GM12878 (cell line): ENCODE measurements at regions of chrX and their contacts with region 1.

Region 1: GRCh38 chrX:13087322-13088155 is 43.1 kb upstream of the FAM9C start:
- DNase-seq: peak; percentile 99
- ATAC-seq: peak; percentile 54
- H3K4me3 ChIP-seq: no peak overlapping the region; the same call in 1 of the 2 replicates
- H3K27ac ChIP-seq: peak overlapping the region; percentile 100
- H3K4me1 ChIP-seq: peaks cover 89% of the 10 kb centered on the region
- H3K27me3 ChIP-seq: no peaks in the 10 kb centered on the region
- CTCF ChIP-seq: no peak
- EP300 ChIP-seq: peak; percentile 71 to 90
- POLR2A ChIP-seq: 0 out of 2 replicates have a peak, but pooled peaks have one; percentile 45
- RAD21 ChIP-seq: 0 out of 2 replicates have a peak, but pooled peaks have one; percentile 15

Region 2: DNA sequence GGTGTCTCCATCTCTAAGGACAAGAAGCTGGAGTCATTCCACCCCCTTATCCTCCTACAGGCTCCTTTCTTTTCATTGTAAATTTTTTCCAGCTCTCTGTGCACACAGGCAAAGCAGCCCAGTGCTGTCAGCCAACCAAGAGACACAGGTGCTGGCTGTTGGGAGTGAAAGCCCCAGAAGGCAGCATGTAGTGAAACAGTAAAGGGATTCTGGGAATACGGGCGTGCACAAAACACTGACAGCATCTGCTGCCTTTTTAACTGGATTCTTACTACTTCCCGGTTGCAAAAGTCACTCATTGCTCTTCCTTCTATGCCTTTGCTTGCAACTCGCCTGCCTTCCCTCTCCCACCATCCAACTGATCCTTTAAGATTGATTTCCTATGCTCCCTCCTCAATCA is 504.9 kb before region 1 on chrX:
- CTCF ChIA-PET with region 1: no interaction called
- POLR2A ChIA-PET with region 1: no interaction called
- RAD21 ChIA-PET with region 1: no interaction called
- SMC1A ChIA-PET with region 1: no interaction called
- in situ Hi-C with region 1: no loop called
- intact Hi-C with region 1: no loop called
- DNase-seq: no peak
- ATAC-seq: no peak
- H3K4me3 ChIP-seq: no peak overlapping the region
- H3K27ac ChIP-seq: no peak overlapping the region
- H3K4me1 ChIP-seq: no peaks in the 10 kb centered on the region
- H3K27me3 ChIP-seq: no peaks in the 10 kb centered on the region
- CTCF ChIP-seq: no peak
- EP300 ChIP-seq: no peak
- POLR2A ChIP-seq: no peak
- RAD21 ChIP-seq: no peak

Region 3: GRCh38 chrX:12868747-12869146 is 218.8 kb before region 1 on chrX:
- CTCF ChIA-PET with region 1: no interaction called
- POLR2A ChIA-PET with region 1: no interaction called
- RAD21 ChIA-PET with region 1: interaction called, 3 read pairs
- SMC1A ChIA-PET with region 1: no interaction called
- in situ Hi-C with region 1: no loop called
- intact Hi-C with region 1: loop called (anchors 10 kb)
- DNase-seq: peak; percentile 78
- ATAC-seq: peak; percentile 73
- H3K4me3 ChIP-seq: peak overlapping the region; percentile 63
- H3K27ac ChIP-seq: peak overlapping the region; percentile 97
- H3K4me1 ChIP-seq: peaks cover 28% of the 10 kb centered on the region
- H3K27me3 ChIP-seq: no peaks in the 10 kb centered on the region
- CTCF ChIP-seq: no peak
- EP300 ChIP-seq: peak in 1 of 2 experiments; percentile 48; a peak in 1 of 4 replicates
- POLR2A ChIP-seq: no peak; the same call in 1 of the 2 replicates
- RAD21 ChIP-seq: no peak

Region 4: DNA sequence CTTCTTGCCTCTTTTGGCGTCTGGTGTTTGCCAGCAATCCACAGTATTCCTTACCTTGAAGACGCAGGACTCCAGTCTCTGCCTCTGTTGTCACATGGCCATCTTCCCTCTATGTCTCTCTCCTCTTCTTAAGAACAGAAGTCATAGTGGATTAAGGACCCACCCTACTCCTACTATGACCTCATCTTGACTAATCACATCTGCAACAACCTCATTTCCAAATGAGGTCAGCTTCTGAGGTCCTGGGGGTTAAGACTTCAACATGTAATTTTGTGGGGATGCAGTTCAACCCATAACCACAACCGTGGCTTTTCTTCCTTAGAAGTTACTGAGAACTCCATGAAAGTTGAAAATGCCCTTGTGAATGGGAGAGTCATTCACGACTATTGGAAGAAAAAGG is 157.8 kb before region 1 on chrX:
- CTCF ChIA-PET with region 1: no interaction called
- POLR2A ChIA-PET with region 1: no interaction called
- RAD21 ChIA-PET with region 1: no interaction called
- SMC1A ChIA-PET with region 1: no interaction called
- in situ Hi-C with region 1: no loop called
- intact Hi-C with region 1: no loop called
- DNase-seq: no peak
- ATAC-seq: no peak
- H3K4me3 ChIP-seq: no peak overlapping the region
- H3K27ac ChIP-seq: no peak overlapping the region
- H3K4me1 ChIP-seq: no peaks in the 10 kb centered on the region
- H3K27me3 ChIP-seq: no peaks in the 10 kb centered on the region
- CTCF ChIP-seq: no peak
- EP300 ChIP-seq: no peak
- POLR2A ChIP-seq: no peak
- RAD21 ChIP-seq: no peak

Region 5: DNA sequence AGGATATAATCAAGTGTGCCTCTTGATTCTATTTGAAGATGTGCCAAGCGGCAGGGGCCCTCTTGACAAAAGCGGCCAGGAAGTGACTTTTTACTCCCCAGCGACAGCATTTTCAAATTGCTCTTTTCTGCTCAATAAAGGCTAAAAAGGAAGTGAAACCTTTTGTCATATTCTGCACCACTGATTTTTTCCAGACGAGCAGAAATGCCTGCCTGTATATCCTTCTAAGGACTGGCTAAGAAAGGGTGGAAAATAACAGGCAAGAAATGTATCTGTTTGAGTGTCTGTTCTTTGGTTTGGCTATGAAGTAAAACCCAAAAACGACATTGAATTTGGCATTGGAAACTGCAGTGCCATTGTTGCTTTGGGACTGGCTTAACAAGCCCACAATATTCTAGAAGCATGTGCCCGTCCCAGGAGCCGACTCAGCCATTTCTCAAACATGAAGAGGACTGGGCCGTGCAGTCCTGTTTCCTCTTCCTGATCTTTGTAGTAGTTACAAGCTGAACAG is 87.2 kb before region 1 on chrX:
- CTCF ChIA-PET with region 1: interaction called, 72 read pairs
- POLR2A ChIA-PET with region 1: interaction called, 280 read pairs
- RAD21 ChIA-PET with region 1: interaction called, 689 read pairs
- SMC1A ChIA-PET with region 1: interaction called, 847 read pairs
- in situ Hi-C with region 1: loop called (anchors 5 kb)
- intact Hi-C with region 1: loop called (anchors 1 kb)
- DNase-seq: peak; percentile 90
- ATAC-seq: peak; percentile 52
- H3K4me3 ChIP-seq: peak overlapping the region; percentile 9; the same call in 1 of the 2 replicates
- H3K27ac ChIP-seq: peak overlapping the region; percentile 91
- H3K4me1 ChIP-seq: peaks cover 69% of the 10 kb centered on the region
- H3K27me3 ChIP-seq: no peaks in the 10 kb centered on the region
- CTCF ChIP-seq: no peak
- EP300 ChIP-seq: peak; percentile 73; a peak in 2 of 4 replicates
- POLR2A ChIP-seq: no peak
- RAD21 ChIP-seq: peak; percentile 10; the same call in 1 of the 2 replicates

Region 6: DNA sequence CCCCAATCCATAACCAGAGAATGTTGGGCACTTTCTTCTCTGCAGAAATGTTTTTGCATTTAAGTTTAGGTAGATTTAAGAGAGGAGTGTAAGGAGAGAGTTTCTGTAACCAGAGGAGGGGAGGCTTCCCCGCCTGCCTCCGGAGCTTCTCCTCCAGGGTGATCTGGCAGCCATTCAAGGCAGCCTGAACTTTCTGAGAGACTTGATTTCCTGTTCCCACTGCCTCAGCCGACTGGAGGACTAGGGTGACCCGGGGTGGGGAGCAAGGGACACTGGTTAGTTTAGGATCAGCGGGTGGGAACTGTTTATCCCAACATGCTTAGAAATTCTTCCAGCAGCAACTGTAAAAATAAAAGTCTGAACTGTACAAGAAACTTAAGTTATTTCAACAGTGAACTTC is 58.2 kb before region 1 on chrX:
- CTCF ChIA-PET with region 1: interaction called, 5 read pairs
- POLR2A ChIA-PET with region 1: interaction called, 11 read pairs
- RAD21 ChIA-PET with region 1: interaction called, 18 read pairs
- SMC1A ChIA-PET with region 1: interaction called, 84 read pairs
- in situ Hi-C with region 1: no loop called
- intact Hi-C with region 1: no loop called
- DNase-seq: no peak
- ATAC-seq: peak; percentile 21
- H3K4me3 ChIP-seq: no peak overlapping the region
- H3K27ac ChIP-seq: peak overlapping the region; percentile 83
- H3K4me1 ChIP-seq: peaks cover 45% of the 10 kb centered on the region
- H3K27me3 ChIP-seq: no peaks in the 10 kb centered on the region
- CTCF ChIP-seq: no peak
- EP300 ChIP-seq: no peak
- POLR2A ChIP-seq: no peak
- RAD21 ChIP-seq: no peak

Region 7: GRCh38 chrX:13170966-13171558 is 83.5 kb after region 1 on chrX:
- CTCF ChIA-PET with region 1: no interaction called
- POLR2A ChIA-PET with region 1: no interaction called
- RAD21 ChIA-PET with region 1: no interaction called
- SMC1A ChIA-PET with region 1: no interaction called
- in situ Hi-C with region 1: no loop called
- intact Hi-C with region 1: no loop called
- DNase-seq: no peak
- ATAC-seq: no peak
- H3K4me3 ChIP-seq: no peak overlapping the region
- H3K27ac ChIP-seq: no peak overlapping the region
- H3K4me1 ChIP-seq: peaks cover 8% of the 10 kb centered on the region
- H3K27me3 ChIP-seq: no peaks in the 10 kb centered on the region
- CTCF ChIP-seq: no peak
- EP300 ChIP-seq: no peak
- POLR2A ChIP-seq: no peak
- RAD21 ChIP-seq: no peak

Region 8: GRCh38 chrX:13194291-13195103 is 107.0 kb after region 1 on chrX:
- CTCF ChIA-PET with region 1: no interaction called
- POLR2A ChIA-PET with region 1: no interaction called
- RAD21 ChIA-PET with region 1: no interaction called
- SMC1A ChIA-PET with region 1: no interaction called
- in situ Hi-C with region 1: no loop called
- intact Hi-C with region 1: no loop called
- DNase-seq: no peak
- ATAC-seq: peak; percentile 85
- H3K4me3 ChIP-seq: no peak overlapping the region
- H3K27ac ChIP-seq: no peak overlapping the region; the same call in 1 of the 2 replicates
- H3K4me1 ChIP-seq: no peaks in the 10 kb centered on the region; the same call in 1 of the 2 replicates
- H3K27me3 ChIP-seq: no peaks in the 10 kb centered on the region
- CTCF ChIP-seq: no peak
- EP300 ChIP-seq: no peak
- POLR2A ChIP-seq: no peak
- RAD21 ChIP-seq: no peak

Region 9: DNA sequence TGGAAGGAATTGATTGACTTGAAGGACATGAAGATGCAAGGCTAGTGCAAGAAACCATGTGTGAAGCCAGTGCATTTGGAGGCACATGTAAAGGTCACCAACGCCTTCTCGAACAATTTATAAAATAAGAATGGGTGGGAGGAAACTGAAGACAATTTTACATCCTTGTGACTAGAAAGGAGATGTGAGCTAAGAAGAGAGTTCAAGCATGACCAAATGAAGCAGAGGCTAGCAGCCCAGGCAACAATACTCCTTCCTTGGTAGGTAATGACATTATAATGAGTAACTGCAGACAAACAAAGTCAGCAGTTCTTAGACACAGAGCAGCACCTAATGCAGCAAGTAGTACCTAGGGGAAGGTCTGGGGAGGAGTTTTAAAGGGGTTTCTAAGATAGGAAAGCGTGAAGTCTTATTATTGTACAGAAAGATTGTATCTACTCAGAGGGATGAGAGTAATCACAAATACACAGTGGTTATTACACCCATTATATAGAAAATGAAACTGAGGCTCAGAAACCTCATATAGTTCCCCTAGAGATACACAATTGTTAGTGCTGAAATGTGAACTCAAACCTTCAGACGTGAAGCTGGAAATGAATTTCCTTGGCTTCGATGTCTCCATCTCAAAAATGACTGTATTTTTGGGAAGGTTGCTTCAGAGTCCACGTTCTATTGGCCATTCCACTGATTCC is 176.2 kb after region 1 on chrX:
- CTCF ChIA-PET with region 1: interaction called, 18 read pairs
- POLR2A ChIA-PET with region 1: interaction called, 5 read pairs
- RAD21 ChIA-PET with region 1: interaction called, 31 read pairs
- SMC1A ChIA-PET with region 1: interaction called, 11 read pairs
- in situ Hi-C with region 1: loop called (anchors 5 kb)
- intact Hi-C with region 1: no loop called
- DNase-seq: peak; percentile 66
- ATAC-seq: peak; percentile 92
- H3K4me3 ChIP-seq: no peak overlapping the region; the same call in 1 of the 2 replicates
- H3K27ac ChIP-seq: peak overlapping the region; percentile 66
- H3K4me1 ChIP-seq: peaks cover 20% of the 10 kb centered on the region
- H3K27me3 ChIP-seq: no peaks in the 10 kb centered on the region
- CTCF ChIP-seq: no peak
- EP300 ChIP-seq: no peak; a peak in 1 of 4 replicates
- POLR2A ChIP-seq: no peak
- RAD21 ChIP-seq: no peak

Region 10: DNA sequence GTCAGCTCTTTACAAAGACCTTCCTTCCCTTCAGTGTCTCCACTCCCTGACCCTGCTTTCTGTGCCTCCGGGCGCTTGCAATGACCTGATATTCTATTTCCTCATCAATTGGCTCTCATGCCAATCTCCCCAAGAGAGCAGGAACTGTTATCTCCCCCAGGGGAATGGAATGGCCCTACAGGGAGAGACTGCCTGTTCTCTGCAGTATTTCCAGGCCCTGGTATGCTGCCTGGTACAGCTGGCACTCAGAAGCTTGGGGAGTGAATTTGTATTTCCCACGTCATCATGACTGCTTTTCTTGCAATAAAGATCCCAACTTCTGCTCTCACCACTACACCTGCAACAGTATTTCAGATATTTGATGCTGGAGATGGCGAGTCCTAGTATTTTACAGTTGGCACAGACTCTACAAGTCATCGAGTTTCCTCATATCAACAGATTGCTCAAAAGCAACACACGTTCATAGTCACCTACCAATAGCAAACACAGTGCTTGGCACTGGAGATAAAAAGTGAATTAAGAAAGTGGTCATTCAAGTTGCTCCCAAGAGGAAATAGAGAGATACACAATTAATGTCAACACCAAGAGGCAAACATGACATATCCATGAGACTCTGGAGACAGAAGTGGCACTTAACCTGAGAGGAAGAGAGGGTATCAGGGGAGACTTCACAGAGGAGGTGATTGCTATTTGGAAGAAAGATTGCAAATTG is 391.4 kb after region 1 on chrX:
- CTCF ChIA-PET with region 1: interaction called, 6 read pairs
- POLR2A ChIA-PET with region 1: no interaction called
- RAD21 ChIA-PET with region 1: interaction called, 9 read pairs
- SMC1A ChIA-PET with region 1: interaction called, 17 read pairs
- in situ Hi-C with region 1: loop called (anchors 5 kb)
- intact Hi-C with region 1: no loop called
- DNase-seq: no peak
- ATAC-seq: no peak
- H3K4me3 ChIP-seq: no peak overlapping the region
- H3K27ac ChIP-seq: no peak overlapping the region
- H3K4me1 ChIP-seq: no peaks in the 10 kb centered on the region
- H3K27me3 ChIP-seq: no peaks in the 10 kb centered on the region
- CTCF ChIP-seq: no peak
- EP300 ChIP-seq: no peak
- POLR2A ChIP-seq: no peak
- RAD21 ChIP-seq: no peak

Region 11: GRCh38 chrX:13750204-13750603 is 662.7 kb after region 1 on chrX:
- CTCF ChIA-PET with region 1: no interaction called
- POLR2A ChIA-PET with region 1: no interaction called
- RAD21 ChIA-PET with region 1: interaction called, 3 read pairs
- SMC1A ChIA-PET with region 1: no interaction called
- in situ Hi-C with region 1: no loop called
- intact Hi-C with region 1: loop called (anchors 5 kb)
- DNase-seq: no peak
- ATAC-seq: peak; percentile 77
- H3K4me3 ChIP-seq: no peak overlapping the region
- H3K27ac ChIP-seq: peak overlapping the region; percentile 57; the same call in 1 of the 2 replicates
- H3K4me1 ChIP-seq: peaks cover 36% of the 10 kb centered on the region
- H3K27me3 ChIP-seq: no peaks in the 10 kb centered on the region
- CTCF ChIP-seq: peak; percentile 65 to 74 (median 70)
- EP300 ChIP-seq: no peak
- POLR2A ChIP-seq: no peak
- RAD21 ChIP-seq: peak; percentile 72